ENCODE measurements at regions of chr12 and their contacts with region 1.

Region 1: GRCh38 chr12:80412369-80412953 is 31.6 kb upstream of the PTPRQ start:
- DNase-seq: peak; percentile 72
- ATAC-seq: peak; percentile 81
- H3K4me3 ChIP-seq: no peak overlapping the region
- H3K27ac ChIP-seq: no peak overlapping the region
- H3K4me1 ChIP-seq: no peaks in the 10 kb centered on the region
- H3K27me3 ChIP-seq: peaks cover 7% of the 10 kb centered on the region; the same call in 1 of the 2 replicates
- CTCF ChIP-seq: peak; percentile 81

Region 2: GRCh38 chr12:80195074-80195726 is 217.3 kb before region 1 on chr12:
- CTCF ChIA-PET with region 1: no interaction called
- POLR2A ChIA-PET with region 1: no interaction called
- intact Hi-C with region 1: loop called (anchors 10 kb)
- DNase-seq: peak; percentile 71
- ATAC-seq: peak; percentile 78
- H3K4me3 ChIP-seq: no peak overlapping the region
- H3K27ac ChIP-seq: no peak overlapping the region
- H3K4me1 ChIP-seq: no peaks in the 10 kb centered on the region
- H3K27me3 ChIP-seq: no peaks in the 10 kb centered on the region
- CTCF ChIP-seq: peak; percentile 79

Region 3: DNA sequence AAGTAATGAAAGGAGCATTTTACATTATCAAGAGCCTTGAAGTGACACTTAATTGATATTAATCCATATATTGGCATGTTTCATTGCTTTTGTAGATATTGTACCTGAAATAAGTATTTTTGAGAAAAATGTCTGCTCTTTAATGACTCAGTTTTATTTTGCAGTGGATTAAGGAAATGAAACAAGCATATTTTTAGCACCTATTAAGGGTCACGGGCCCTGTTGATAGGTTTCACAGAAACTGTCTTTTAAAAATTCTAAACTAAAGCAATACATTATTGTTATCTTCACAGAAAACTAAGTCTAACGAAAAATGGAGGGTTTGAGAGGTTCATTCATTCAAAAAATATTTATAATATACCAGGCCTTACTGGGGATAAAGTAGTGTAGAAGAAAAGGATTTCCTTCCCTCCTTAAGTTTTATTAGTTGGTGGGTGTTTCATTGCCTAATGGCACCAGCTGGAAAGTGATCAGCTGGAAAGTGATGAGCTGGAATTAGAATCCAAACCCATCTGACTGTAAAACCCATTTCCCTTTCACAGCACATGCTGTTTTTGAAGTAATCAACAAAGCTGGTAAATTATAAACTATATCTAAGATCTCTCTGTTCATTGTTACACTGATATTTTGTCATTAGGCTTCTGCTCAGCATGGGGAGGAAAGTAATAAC is 85.7 kb after region 1 on chr12:
- CTCF ChIA-PET with region 1: no interaction called
- POLR2A ChIA-PET with region 1: no interaction called
- intact Hi-C with region 1: no loop called
- DNase-seq: no peak
- ATAC-seq: no peak
- H3K4me3 ChIP-seq: no peak overlapping the region
- H3K27ac ChIP-seq: no peak overlapping the region
- H3K4me1 ChIP-seq: no peaks in the 10 kb centered on the region
- H3K27me3 ChIP-seq: no peaks in the 10 kb centered on the region; the same call in 1 of the 2 replicates
- CTCF ChIP-seq: no peak

Region 4: GRCh38 chr12:80598004-80598606 is 185.6 kb after region 1 on chr12:
- CTCF ChIA-PET with region 1: no interaction called
- POLR2A ChIA-PET with region 1: no interaction called
- intact Hi-C with region 1: loop called (anchors 1 kb)
- DNase-seq: peak; percentile 72
- ATAC-seq: peak; percentile 90
- H3K4me3 ChIP-seq: no peak overlapping the region
- H3K27ac ChIP-seq: no peak overlapping the region; the same call in 1 of the 2 replicates
- H3K4me1 ChIP-seq: peaks cover 13% of the 10 kb centered on the region
- H3K27me3 ChIP-seq: no peaks in the 10 kb centered on the region
- CTCF ChIP-seq: peak; percentile 74

Region 5: DNA sequence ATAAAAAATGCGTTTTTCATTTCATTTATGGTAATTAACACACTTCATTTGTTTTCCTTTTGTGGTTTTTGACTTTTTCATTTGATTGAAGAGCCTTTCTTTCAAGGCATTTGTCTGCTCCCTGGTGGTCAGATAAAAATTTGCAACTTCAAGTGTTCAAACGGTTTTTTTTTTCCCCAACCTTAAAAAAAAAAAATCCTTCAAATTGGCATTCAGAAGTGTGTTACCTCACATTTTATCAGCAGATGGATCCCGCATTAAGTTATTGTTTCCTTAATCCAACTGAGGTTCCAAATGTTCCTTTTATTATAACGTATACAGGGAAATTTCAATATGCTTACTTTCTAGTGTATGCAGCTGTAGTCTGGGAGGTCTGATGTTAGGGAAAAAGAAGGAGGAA is 351.4 kb after region 1 on chr12:
- CTCF ChIA-PET with region 1: no interaction called
- POLR2A ChIA-PET with region 1: no interaction called
- intact Hi-C with region 1: loop called (anchors 1 kb)
- DNase-seq: peak; percentile 60
- ATAC-seq: no peak
- H3K4me3 ChIP-seq: no peak overlapping the region
- H3K27ac ChIP-seq: no peak overlapping the region
- H3K4me1 ChIP-seq: no peaks in the 10 kb centered on the region
- H3K27me3 ChIP-seq: peaks cover 28% of the 10 kb centered on the region
- CTCF ChIP-seq: peak; percentile 78

Region 6: GRCh38 chr12:81257947-81258551 is 845.6 kb after region 1 on chr12:
- CTCF ChIA-PET with region 1: no interaction called
- POLR2A ChIA-PET with region 1: no interaction called
- intact Hi-C with region 1: loop called (anchors 10 kb)
- DNase-seq: peak; percentile 66
- ATAC-seq: no peak; the same call in 1 of the 2 replicates
- H3K4me3 ChIP-seq: no peak overlapping the region
- H3K27ac ChIP-seq: no peak overlapping the region
- H3K4me1 ChIP-seq: no peaks in the 10 kb centered on the region
- H3K27me3 ChIP-seq: peaks cover 4% of the 10 kb centered on the region
- CTCF ChIP-seq: peak; percentile 76